ENCODE measurements at regions of chr6 and their contacts with region 1.

Region 1: GRCh38 chr6:104881964-104882668 is 22.4 kb upstream of the HACE1 start:
- DNase-seq: no peak
- ATAC-seq: no peak
- H3K4me3 ChIP-seq: no peak overlapping the region
- H3K4me3 Mint-ChIP-seq: no peak overlapping the region
- H3K27ac ChIP-seq: no peak overlapping the region
- H3K27ac Mint-ChIP-seq: no peak overlapping the region
- H3K4me1 ChIP-seq: no peaks in the 10 kb centered on the region
- H3K4me1 Mint-ChIP-seq: no peaks in the 10 kb centered on the region
- H3K27me3 ChIP-seq: peaks cover 0 to 14% of the 10 kb centered on the region in 2 experiments
- H3K27me3 Mint-ChIP-seq: peaks cover 9 to 13% of the 10 kb centered on the region in 2 donors

Region 2: DNA sequence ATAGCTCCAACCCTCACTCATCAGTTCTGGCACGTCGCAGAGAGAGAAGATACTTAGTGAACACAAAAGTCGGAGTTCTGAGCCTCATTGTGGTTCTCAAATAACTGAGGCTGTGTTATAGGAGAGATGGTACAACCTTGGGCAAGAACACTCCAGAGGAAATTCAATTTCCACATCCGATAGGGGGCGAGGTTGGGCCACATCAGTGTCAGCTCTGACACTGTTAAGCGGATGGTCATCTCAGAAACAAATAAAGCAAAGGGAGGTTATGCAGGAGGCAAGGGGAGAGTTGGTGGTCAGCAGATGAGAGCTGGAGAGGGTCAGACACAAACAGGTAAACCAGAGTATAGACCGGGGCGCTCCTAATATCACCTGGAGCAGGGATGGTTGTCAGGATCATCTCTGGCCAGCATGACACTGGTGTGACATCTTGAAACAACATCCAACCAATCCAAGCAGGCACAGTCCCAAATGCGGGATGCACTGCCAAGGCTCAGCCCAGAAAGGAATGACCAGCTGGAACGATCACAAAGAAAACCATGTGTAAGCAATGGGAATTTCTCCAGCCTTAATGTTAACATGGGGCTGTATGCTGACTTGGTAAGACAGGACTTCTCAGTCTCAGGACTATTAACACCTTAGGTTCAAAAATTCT is 354.2 kb before region 1 on chr6:
- CTCF ChIA-PET with region 1: no interaction called
- POLR2A ChIA-PET with region 1: no interaction called
- DNase-seq: no peak
- ATAC-seq: no peak
- H3K4me3 ChIP-seq: no peak overlapping the region
- H3K4me3 Mint-ChIP-seq: no peak overlapping the region
- H3K27ac ChIP-seq: no peak overlapping the region
- H3K27ac Mint-ChIP-seq: no peak overlapping the region
- H3K4me1 ChIP-seq: no peaks in the 10 kb centered on the region
- H3K4me1 Mint-ChIP-seq: peaks cover 0 to 5% (median 4%) of the 10 kb centered on the region in 3 donors
- H3K27me3 ChIP-seq: peaks cover 0 to 3% of the 10 kb centered on the region in 2 experiments
- H3K27me3 Mint-ChIP-seq: peaks cover 10 to 15% of the 10 kb centered on the region in 2 donors

Region 3: GRCh38 chr6:104813552-104813951 is 68.6 kb before region 1 on chr6:
- CTCF ChIA-PET with region 1: no interaction called
- POLR2A ChIA-PET with region 1: interaction called in 1 of 2 experiments, 13 read pairs
- DNase-seq: no peak
- ATAC-seq: no peak
- H3K4me3 ChIP-seq: no peak overlapping the region
- H3K4me3 Mint-ChIP-seq: no peak overlapping the region
- H3K27ac ChIP-seq: no peak overlapping the region
- H3K27ac Mint-ChIP-seq: no peak overlapping the region
- H3K4me1 ChIP-seq: no peaks in the 10 kb centered on the region
- H3K4me1 Mint-ChIP-seq: peaks cover 0 to 15% (median 0%) of the 10 kb centered on the region in 3 donors
- H3K27me3 ChIP-seq: no peaks in the 10 kb centered on the region
- H3K27me3 Mint-ChIP-seq: no peaks in the 10 kb centered on the region

Measured in T-cell (primary cell).